Transverse colon (tissue), 4 donors: ENCODE measurements at regions of chr9 and their contacts with region 1.

Region 1: DNA sequence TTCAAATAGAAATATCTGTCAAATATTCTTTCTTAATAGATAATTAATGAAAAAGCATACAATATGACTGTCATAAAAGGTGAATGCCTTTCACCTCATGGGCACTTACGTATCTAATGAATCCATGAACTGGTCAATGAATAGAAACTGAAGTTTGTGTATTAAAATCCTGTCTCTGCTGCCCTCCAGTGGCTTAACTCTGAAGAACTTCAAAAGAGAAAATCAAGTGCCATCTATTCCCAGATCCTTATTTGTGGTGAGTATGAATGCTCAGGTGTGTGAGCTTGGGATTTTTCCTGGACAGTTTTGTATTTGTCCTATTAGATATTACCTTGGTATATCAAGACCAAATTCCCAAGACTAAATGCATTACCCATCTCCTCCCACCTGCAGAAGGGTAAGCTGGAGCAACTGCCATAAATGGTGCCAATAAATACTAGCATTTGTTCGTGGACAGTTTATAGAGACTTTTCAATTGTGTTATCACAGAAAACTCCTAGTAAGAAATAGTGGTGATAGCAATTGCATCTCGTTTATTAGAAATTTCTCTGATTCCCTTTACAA is 44.0 kb upstream of the SVEP1 start:
- DNase-seq: peak; percentile 22
- H3K4me3 ChIP-seq: no peak overlapping the region
- H3K27ac ChIP-seq: no peak overlapping the region
- H3K4me1 ChIP-seq: no peaks in the 10 kb centered on the region
- H3K27me3 ChIP-seq: no peaks in the 10 kb centered on the region
- CTCF ChIP-seq: peak; percentile 62 to 70 (median 65)
- EP300 ChIP-seq: no peak
- POLR2A ChIP-seq: no peak

Region 2: GRCh38 chr9:110183208-110184145 is 440.1 kb before region 1 on chr9:
- in situ Hi-C with region 1: loop called in 2 of 4 experiments (anchors 10 to 25 kb)
- intact Hi-C with region 1: loop called (anchors 10 kb)
- DNase-seq: peak; percentile 81
- H3K4me3 ChIP-seq: no peak overlapping the region
- H3K27ac ChIP-seq: no peak overlapping the region
- H3K4me1 ChIP-seq: peaks cover 5 to 24% (median 12%) of the 10 kb centered on the region in 4 donors
- H3K27me3 ChIP-seq: no peaks in the 10 kb centered on the region
- CTCF ChIP-seq: peak; percentile 67 to 89 (median 77)
- EP300 ChIP-seq: no peak
- POLR2A ChIP-seq: no peak

Region 3: DNA sequence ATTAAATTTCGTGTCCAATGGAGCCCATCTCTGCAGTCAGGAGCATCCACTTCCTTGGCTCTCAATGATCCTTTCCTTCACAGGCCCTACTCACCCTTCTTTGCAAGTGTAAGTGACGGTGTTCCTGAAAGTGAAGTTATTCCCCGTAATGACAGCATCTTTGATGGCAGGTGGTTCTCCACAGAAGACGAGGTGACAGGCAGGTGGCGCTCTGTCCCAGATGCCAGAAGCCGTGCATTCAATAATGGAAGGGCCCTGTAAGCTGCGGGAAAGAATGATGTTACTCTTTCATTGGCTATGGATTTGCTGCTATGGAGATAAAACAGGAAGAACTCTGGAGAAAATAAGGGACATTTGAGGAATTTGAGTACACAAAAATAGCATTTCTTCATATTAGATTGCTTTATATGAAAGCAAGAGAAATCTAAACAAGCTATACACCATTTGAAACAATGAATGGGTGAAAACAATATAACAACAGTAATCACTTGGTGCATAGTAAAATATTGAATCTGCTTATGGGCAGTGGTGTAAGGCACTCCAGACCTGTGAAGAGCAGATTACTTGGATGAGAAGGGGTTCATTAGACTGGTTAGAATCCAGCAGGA is 195.9 kb before region 1 on chr9:
- in situ Hi-C with region 1: loop called in 2 of 4 experiments (anchors 25 kb)
- intact Hi-C with region 1: no loop called
- DNase-seq: peak; percentile 69
- H3K4me3 ChIP-seq: no peak overlapping the region
- H3K27ac ChIP-seq: no peak overlapping the region
- H3K4me1 ChIP-seq: no peaks in the 10 kb centered on the region
- H3K27me3 ChIP-seq: no peaks in the 10 kb centered on the region
- CTCF ChIP-seq: peak; percentile 42 to 49 (median 46)
- EP300 ChIP-seq: no peak
- POLR2A ChIP-seq: no peak

Region 4: GRCh38 chr9:111298731-111299598 is 675.4 kb after region 1 on chr9:
- in situ Hi-C with region 1: loop called in 1 of 4 experiments (anchors 25 kb)
- intact Hi-C with region 1: no loop called
- DNase-seq: peak; percentile 11
- H3K4me3 ChIP-seq: no peak overlapping the region
- H3K27ac ChIP-seq: peak overlapping the region; percentile 1 to 62 (median 41)
- H3K4me1 ChIP-seq: peaks cover 0 to 16% (median 0%) of the 10 kb centered on the region in 4 donors
- H3K27me3 ChIP-seq: no peaks in the 10 kb centered on the region
- CTCF ChIP-seq: peak; percentile 76 to 91 (median 82)
- EP300 ChIP-seq: no peak
- POLR2A ChIP-seq: no peak